A673 (cell line): ENCODE measurements at regions of chr10 and their contacts with region 1.

Region 1: GRCh38 chr10:102352066-102352715 is 43.3 kb upstream of the NFKB2 start:
- DNase-seq: peak; percentile 82
- H3K4me3 ChIP-seq: no peak overlapping the region
- H3K27ac ChIP-seq: no peak overlapping the region
- H3K4me1 ChIP-seq: no peaks in the 10 kb centered on the region
- H3K27me3 ChIP-seq: no peaks in the 10 kb centered on the region
- CTCF ChIP-seq: peak; percentile 96

Region 2: DNA sequence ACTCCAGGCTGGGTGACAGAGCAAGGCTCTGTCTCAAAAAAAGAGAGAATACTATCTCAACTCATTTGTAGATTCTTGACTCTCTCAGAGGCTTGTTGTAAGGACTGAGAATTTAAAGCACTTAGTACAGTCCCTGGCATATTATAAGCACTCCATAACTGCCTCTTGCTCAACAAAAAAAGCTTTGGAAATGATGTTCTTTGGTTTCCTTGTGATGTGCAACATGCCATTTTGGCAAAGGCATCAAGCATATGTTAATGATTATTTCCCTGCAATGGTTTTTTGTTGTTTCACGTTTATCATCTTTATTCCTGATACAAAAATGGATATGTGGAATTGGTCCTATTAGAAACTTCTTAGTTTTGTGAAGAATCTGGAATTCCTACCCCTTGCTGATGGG is 184.3 kb before region 1 on chr10:
- CTCF ChIA-PET with region 1: interaction called, 18 read pairs
- POLR2A ChIA-PET with region 1: no interaction called
- intact Hi-C with region 1: loop called (anchors 1 kb)
- DNase-seq: no peak
- H3K4me3 ChIP-seq: no peak overlapping the region
- H3K27ac ChIP-seq: no peak overlapping the region
- H3K4me1 ChIP-seq: no peaks in the 10 kb centered on the region
- H3K27me3 ChIP-seq: no peaks in the 10 kb centered on the region
- CTCF ChIP-seq: no peak

Region 3: DNA sequence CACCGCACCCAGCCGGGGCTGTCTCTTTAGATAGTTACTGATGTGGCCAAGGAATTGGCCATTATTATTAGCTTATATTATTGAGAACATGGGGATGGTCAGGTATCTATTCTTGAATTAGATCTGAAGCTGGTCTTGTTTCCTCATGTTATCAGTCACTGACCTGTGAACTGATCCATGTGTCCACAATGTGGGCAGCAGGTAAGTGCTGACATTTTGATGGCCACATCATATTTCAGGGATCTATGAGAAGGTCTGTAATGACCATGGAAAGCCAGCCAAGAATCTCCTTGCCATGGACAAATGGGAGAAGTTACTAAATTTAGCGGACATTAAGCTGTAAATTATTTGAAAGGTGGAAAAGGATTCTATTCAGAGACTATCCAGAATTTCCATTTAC is 45.5 kb before region 1 on chr10:
- CTCF ChIA-PET with region 1: interaction called, 3 read pairs
- POLR2A ChIA-PET with region 1: interaction called, 13 read pairs
- intact Hi-C with region 1: no loop called
- DNase-seq: no peak
- H3K4me3 ChIP-seq: no peak overlapping the region
- H3K27ac ChIP-seq: no peak overlapping the region
- H3K4me1 ChIP-seq: no peaks in the 10 kb centered on the region
- H3K27me3 ChIP-seq: no peaks in the 10 kb centered on the region
- CTCF ChIP-seq: no peak

Region 4: GRCh38 chr10:102322914-102323313 is 29.3 kb before region 1 on chr10:
- CTCF ChIA-PET with region 1: interaction called, 11 read pairs
- POLR2A ChIA-PET with region 1: no interaction called
- intact Hi-C with region 1: no loop called
- DNase-seq: no peak
- H3K4me3 ChIP-seq: no peak overlapping the region
- H3K27ac ChIP-seq: no peak overlapping the region
- H3K4me1 ChIP-seq: no peaks in the 10 kb centered on the region
- H3K27me3 ChIP-seq: no peaks in the 10 kb centered on the region
- CTCF ChIP-seq: no peak

Region 5: DNA sequence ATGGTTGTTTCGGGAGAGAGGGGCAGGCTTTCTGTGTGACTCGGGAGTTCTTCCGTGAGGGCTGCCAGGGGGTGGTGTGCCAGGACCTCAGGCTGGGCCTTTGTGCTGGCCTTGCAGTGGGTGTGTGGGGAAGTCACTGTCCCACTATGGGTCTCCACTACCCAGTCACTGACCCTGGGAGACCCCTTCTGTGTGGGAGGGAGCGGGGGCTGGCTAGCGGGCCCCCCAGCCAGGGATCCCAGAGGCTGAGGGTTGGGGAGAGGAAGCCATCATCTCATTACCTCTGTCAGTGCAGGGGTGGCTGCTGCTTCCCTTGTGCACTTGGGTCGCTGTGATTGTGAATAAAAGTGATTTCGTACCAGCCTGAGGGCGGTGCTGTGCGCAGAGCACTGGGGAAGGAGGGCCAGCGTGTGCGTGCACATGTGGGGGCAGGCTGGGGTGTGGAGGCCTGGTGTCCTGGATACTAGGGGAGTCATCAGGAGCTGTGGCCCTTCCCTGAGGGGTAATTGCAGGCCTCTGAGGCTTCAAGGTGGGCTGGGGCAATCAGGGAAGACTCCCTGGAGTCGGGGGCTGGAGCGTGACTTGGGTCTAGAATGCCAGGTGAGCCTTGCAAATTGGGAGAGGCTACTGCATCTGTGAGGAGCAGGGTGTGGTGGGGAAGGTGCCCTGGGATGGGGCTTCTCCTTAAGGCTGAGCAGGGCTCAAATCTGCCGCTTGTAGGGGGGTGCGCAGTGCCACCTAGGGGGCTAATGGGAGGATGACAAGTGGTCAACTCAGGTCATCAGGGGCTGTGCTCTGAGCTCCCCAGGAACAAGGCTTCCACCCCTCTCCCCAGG is 1240.2 kb after region 1 on chr10:
- CTCF ChIA-PET with region 1: no interaction called
- POLR2A ChIA-PET with region 1: no interaction called
- intact Hi-C with region 1: no loop called
- DNase-seq: peak; percentile 51
- H3K4me3 ChIP-seq: no peak overlapping the region
- H3K27ac ChIP-seq: no peak overlapping the region
- H3K4me1 ChIP-seq: no peaks in the 10 kb centered on the region
- H3K27me3 ChIP-seq: no peaks in the 10 kb centered on the region
- CTCF ChIP-seq: peak; percentile 75